PC-9 (cell line): ENCODE measurements at regions of chr15 and their contacts with region 1.

Region 1: GRCh38 chr15:86231864-86232721 is 152.4 kb downstream of the AGBL1 start:
- DNase-seq: no peak
- H3K4me3 ChIP-seq: no peak overlapping the region
- H3K27ac ChIP-seq: no peak overlapping the region
- H3K4me1 ChIP-seq: no peaks in the 10 kb centered on the region
- H3K27me3 ChIP-seq: peaks cover 13% of the 10 kb centered on the region; the same call in 1 of the 2 replicates
- CTCF ChIP-seq: peak; percentile 61

Region 2: DNA sequence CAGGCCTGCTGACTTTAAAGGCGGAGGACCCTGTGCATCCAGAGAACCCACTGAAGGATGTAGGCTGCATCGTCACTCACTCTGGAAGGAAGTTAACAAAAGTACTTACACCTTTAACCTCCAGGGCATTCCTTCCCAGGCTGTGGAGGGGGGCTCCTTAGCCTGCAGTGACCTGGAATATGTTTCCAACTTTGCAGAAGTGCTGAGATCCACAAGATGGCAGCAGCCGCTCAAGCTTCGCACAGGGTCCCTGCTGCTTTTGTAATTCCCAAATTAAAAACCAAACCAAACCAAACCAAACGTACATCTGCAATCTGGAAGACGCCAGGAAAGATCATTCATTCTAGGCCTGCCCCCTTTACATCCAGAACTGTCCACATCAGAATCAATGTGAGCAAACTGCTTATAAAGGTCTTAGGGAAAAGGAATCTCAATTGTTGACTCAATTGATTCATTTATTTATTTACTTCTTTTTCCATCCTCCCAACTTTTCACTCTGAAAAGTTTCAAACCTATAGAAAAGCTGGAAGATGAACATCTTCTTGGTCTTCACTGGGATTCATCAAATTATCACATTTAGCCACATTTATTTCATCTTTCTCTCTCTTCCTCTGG is 366.9 kb before region 1 on chr15:
- CTCF ChIA-PET with region 1: no interaction called
- POLR2A ChIA-PET with region 1: no interaction called
- intact Hi-C with region 1: loop called (anchors 10 kb)
- DNase-seq: peak in 1 of 2 experiments; percentile 14
- H3K4me3 ChIP-seq: no peak overlapping the region
- H3K27ac ChIP-seq: no peak overlapping the region
- H3K4me1 ChIP-seq: no peaks in the 10 kb centered on the region
- H3K27me3 ChIP-seq: peaks cover 74% of the 10 kb centered on the region
- CTCF ChIP-seq: peak; percentile 71

Region 3: DNA sequence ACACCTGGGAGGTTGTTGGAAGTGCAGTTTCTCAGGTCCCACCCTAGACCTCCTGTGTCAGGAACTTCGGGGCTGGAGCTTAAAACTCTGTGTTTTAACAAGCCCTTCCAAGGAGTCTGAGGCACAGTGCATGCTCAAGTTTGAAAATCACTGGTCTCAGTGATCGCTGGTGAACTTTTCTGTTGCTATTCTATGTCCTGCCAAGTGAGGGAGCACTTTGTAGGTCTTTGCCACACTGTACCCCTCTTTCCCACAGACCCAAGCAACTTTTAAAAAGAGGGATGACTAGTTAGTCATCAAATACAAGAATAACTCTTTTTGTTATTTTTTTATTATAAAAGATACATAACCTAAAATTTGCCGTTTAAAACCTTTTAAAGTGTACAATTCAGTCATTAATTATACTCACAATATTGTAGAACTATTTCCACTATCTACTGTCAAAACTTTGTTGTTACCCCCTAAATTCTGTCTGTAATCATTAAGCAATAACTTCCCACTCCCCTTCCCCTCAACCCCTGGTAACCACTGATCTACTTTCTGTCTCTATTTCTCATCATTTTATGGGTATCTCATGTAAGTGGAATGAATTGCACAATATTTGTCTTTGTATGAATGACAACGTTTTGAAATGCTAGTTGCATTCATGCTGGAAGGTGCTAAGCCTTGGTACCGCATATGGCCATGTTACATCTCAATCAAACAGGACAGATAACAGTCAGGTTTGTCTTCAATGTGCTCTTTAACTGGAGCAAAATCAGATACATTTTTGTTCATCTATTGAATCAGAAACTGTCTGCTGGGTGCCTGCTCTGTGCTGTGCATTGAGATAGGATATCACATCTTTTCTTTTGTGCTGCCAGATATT is 18.4 kb before region 1 on chr15:
- CTCF ChIA-PET with region 1: no interaction called
- POLR2A ChIA-PET with region 1: no interaction called
- intact Hi-C with region 1: no loop called
- DNase-seq: no peak
- H3K4me3 ChIP-seq: no peak overlapping the region
- H3K27ac ChIP-seq: no peak overlapping the region
- H3K4me1 ChIP-seq: no peaks in the 10 kb centered on the region
- H3K27me3 ChIP-seq: no peaks in the 10 kb centered on the region
- CTCF ChIP-seq: no peak; the same call in 1 of the 2 replicates